Activated T-helper 1 cell treated with anti-CD3 and anti-CD28 coated beads, Interleukin-12 subunit alpha, Interleukin-12 subunit beta, Interleukin-2, Interleukin-4 antibody, amounts not matched to agents 30 ng/mL and 10 ng/mL and 1 ng/mL, durations not matched to agents 14 hours and 24 hours and 36 hours (primary cell): ENCODE measurements at regions of chr1 and their contacts with region 1.

Region 1: DNA sequence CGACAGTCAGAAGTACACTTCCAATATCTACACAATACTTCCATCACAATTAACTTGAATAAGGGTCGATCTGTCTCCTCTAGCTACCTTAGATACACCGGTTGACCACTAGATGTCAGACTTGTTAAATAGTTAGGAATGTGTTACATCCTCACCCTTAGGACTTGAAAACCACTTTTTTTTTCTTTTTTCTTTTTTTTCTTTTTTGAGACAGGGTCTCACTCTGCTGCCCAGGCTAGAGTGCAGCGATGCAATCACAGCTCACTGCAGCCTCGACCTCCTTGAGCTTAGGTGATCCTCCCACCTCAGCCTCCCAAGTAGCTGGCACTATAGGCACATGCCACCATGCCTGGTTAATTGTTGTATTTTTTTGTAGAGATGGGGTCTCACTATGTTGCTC is 120.4 kb upstream of the GREM2 start:
- DNase-seq: no peak
- H3K4me3 Mint-ChIP-seq: no peak overlapping the region
- H3K27ac Mint-ChIP-seq: no peak overlapping the region
- H3K4me1 Mint-ChIP-seq: no peaks in the 10 kb centered on the region
- H3K27me3 Mint-ChIP-seq: no peaks in the 10 kb centered on the region

Region 2: GRCh38 chr1:240831191-240831631 is 98.8 kb after region 1 on chr1:
- intact Hi-C with region 1: no loop called
- DNase-seq: no peak
- H3K4me3 Mint-ChIP-seq: no peak overlapping the region
- H3K27ac Mint-ChIP-seq: no peak overlapping the region
- H3K4me1 Mint-ChIP-seq: no peaks in the 10 kb centered on the region
- H3K27me3 Mint-ChIP-seq: no peaks in the 10 kb centered on the region

Region 3: GRCh38 chr1:241499910-241500309 is 767.5 kb after region 1 on chr1:
- intact Hi-C with region 1: loop called (anchors 5 kb)
- DNase-seq: no peak
- H3K4me3 Mint-ChIP-seq: no peak overlapping the region
- H3K27ac Mint-ChIP-seq: no peak overlapping the region
- H3K4me1 Mint-ChIP-seq: peaks cover 14% of the 10 kb centered on the region
- H3K27me3 Mint-ChIP-seq: no peaks in the 10 kb centered on the region